ENCODE measurements at regions of chr2 and their contacts with region 1.

Region 1: DNA sequence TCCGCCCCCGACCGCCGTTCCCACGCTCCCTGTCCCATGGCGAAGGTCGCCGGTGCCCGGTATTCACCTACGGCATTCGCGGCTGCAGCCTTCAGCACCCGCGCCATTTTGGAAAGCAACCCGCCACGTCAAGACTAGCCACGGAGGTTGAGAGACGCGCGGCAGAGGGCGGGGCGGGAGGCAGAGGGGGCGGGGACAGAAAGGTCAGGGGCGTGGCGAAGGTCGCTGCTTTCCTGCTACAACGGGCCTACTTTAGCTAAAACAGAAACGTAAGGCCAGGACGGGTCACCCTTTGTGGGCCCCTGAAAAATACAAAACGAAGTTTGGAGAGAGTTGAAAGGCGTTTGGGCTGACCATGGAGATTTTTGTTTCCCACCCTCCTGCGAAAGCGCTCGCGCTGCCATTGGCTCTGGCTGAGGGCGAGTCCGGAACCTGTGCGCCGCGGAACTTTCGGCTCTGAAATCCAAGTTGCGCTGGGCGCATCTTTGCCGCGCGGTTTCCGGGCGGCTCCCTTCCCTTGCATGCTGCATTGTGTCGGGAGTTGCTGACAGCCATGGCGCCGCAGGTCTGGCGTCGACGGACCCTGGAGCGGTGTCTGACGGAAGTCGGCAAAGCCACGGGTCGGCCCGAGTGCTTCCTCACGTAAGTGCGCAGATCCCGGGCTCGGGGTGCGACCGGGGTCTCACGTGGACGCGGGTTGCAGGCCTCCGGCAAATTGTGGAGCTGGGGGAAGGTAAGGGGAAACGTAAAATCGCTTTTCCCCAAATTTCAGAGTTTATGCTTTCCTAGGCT is at the starts of genes MCEE and MPHOSPH10:
- DNase-seq: peak; percentile 87
- H3K4me3 Mint-ChIP-seq: no peak within 1 kb of the TSS
- H3K27ac Mint-ChIP-seq: no peak within 1 kb of the TSS
- H3K4me1 Mint-ChIP-seq: peaks cover 13% of the 10 kb centered on the region
- H3K27me3 Mint-ChIP-seq: no peaks in the 10 kb centered on the region
- total RNA-seq, gene MCEE: 12.8 and 14.3 TPM in 2 replicates
- total RNA-seq, gene MPHOSPH10: 52.3 and 54.3 TPM in 2 replicates

Region 2: GRCh38 chr2:71068218-71069035 is 61.9 kb before region 1 on chr2 and contains the start of gene NAGK:
- intact Hi-C with region 1: loop called (anchors 1 kb)
- DNase-seq: peak; percentile 97
- H3K4me3 Mint-ChIP-seq: peak within 1 kb of the TSS; percentile 95
- H3K27ac Mint-ChIP-seq: peak within 1 kb of the TSS; percentile 94
- H3K4me1 Mint-ChIP-seq: peaks cover 44% of the 10 kb centered on the region
- H3K27me3 Mint-ChIP-seq: peaks cover 1% of the 10 kb centered on the region
- total RNA-seq, gene NAGK: 59.3 and 62.4 TPM in 2 replicates

Region 3: GRCh38 chr2:71276311-71277146 is 146.2 kb after region 1 on chr2:
- intact Hi-C with region 1: loop called (anchors 10 kb)
- DNase-seq: peak; percentile 85
- H3K4me3 Mint-ChIP-seq: peak overlapping the region; percentile 72
- H3K27ac Mint-ChIP-seq: no peak overlapping the region
- H3K4me1 Mint-ChIP-seq: peaks cover 9% of the 10 kb centered on the region
- H3K27me3 Mint-ChIP-seq: peaks cover 76% of the 10 kb centered on the region

Region 4: GRCh38 chr2:71331581-71332434 is 201.5 kb after region 1 on chr2 and contains the start of gene ZNF638:
- intact Hi-C with region 1: loop called (anchors 2 kb)
- DNase-seq: peak; percentile 89
- H3K4me3 Mint-ChIP-seq: peak within 1 kb of the TSS; percentile 99
- H3K27ac Mint-ChIP-seq: peak within 1 kb of the TSS; percentile 100
- H3K4me1 Mint-ChIP-seq: peaks cover 17% of the 10 kb centered on the region
- H3K27me3 Mint-ChIP-seq: peaks cover 11% of the 10 kb centered on the region
- total RNA-seq, gene ZNF638: 96.5 and 97.6 TPM in 2 replicates

Region 5: GRCh38 chr2:71348302-71348701 is 218.0 kb after region 1 on chr2:
- intact Hi-C with region 1: no loop called
- DNase-seq: no peak
- H3K4me3 Mint-ChIP-seq: no peak overlapping the region
- H3K27ac Mint-ChIP-seq: no peak overlapping the region
- H3K4me1 Mint-ChIP-seq: peaks cover 15% of the 10 kb centered on the region
- H3K27me3 Mint-ChIP-seq: no peaks in the 10 kb centered on the region

Measured in activated T-helper 2 cell treated with anti-CD3 and anti-CD28 coated beads, Interferon-gamma antibody, Interleukin-2, Interleukin-4, amounts not matched to agents 10 μg/mL and 5 μg/mL and 100 μg/mL, durations not matched to agents 14 hours and 24 hours and 36 hours (primary cell).